Left lung (tissue), 14 donors: ENCODE measurements at regions of chr15 and their contacts with region 1.

Region 1: DNA sequence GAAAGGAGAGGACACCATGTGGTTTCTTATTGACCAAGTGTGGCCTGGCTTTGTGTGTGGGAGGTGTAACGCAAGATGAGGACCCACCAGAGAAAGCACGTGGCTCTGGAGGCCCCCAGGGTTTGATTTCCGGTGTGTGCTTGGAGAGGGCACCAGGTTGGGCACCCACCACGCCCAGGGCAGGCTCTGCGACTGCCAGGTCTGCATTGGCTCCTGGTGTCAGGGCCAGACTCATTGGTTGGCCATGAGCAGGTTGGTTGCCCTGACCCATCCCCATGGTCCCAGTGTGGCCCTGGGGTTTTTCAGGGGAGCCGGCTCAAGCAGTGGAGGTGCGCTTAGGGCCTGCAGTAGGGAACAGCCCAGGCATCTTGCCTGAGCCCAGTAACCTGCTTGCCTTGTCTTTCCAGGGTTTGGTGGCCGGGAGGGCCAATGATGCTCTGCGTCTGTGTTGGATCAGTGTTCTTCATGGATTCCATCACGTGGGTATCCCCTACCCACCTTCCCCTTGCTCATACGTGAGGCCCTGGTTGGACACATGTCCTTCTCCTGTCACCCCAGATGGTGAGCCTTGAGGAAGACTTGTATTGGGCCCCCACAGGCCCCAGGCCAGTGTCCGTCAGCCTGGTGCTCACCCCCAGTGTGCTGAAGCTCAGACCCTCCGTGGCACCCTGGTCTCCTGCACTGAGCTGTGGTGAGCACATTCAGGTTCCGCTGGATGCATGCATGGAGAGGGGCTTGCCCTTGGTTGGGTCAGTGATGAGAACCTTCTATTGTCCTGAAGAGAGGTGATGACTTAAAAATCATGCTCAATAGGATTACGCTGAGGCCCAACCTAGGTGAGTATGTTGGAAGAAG is 193.9 kb downstream of the UBE3A start:
- DNase-seq: peak in 2 of 4 donors; percentile 16 to 53
- ATAC-seq: no peak
- H3K4me3 ChIP-seq: no peak overlapping the region
- H3K27ac ChIP-seq: no peak overlapping the region
- H3K4me1 ChIP-seq: no peaks in the 10 kb centered on the region
- H3K27me3 ChIP-seq: no peaks in the 10 kb centered on the region
- CTCF ChIP-seq: no peak

Region 2: DNA sequence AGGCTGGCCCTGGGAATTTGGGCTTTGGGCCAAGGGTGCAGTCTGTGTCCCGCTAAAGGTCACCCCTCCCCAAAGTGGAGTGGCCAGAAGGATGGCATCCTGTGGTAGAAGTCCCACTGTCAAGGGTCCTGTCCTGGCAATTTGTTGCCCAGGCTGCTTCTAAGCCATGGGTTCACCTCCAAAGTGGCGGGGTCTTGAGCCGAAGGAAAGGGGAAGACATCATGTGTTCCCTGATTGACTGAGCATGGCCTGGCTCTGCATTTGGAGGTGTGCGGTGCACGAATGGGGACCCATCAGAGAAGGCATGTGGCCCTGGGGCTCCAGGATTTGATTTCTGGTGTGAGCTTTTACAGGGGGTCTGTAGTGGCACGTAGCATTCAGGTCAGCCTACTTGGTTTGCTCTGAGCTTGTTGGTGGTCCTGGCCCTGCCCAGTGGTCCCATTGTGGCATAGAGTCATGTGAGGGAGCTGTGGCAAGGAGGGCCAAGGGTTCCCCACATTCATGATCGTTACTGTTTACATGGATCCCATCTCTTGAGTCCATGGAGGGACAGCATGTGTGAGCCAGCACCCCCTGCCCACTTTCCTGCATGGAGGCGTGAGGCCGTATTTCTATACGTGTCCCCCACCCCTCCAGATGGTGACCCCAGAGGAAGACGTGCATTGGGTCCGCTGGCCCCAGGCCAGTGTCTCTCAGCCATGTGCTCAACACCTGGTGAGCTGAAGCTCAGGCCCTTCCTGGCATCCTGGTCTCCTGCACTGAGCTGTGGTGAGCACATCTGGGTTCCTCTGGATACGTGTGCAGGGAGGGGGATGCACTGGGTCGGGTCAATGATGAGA is 65.1 kb before region 1 on chr15:
- intact Hi-C with region 1: loop called in 1 of 2 experiments (anchors 10 kb)
- DNase-seq: peak in 2 of 4 donors; percentile 29 to 53
- ATAC-seq: no peak
- H3K4me3 ChIP-seq: no peak overlapping the region
- H3K27ac ChIP-seq: no peak overlapping the region
- H3K4me1 ChIP-seq: no peaks in the 10 kb centered on the region
- H3K27me3 ChIP-seq: no peaks in the 10 kb centered on the region
- CTCF ChIP-seq: no peak